ENCODE measurements at regions of chr11 and their contacts with region 1.

Region 1: GRCh38 chr11:9613118-9613829 is 39.8 kb downstream of the WEE1 start:
- DNase-seq: peak; percentile 95 to 97
- ATAC-seq: peak; percentile 96
- H3K4me3 ChIP-seq: peak overlapping the region in 1 of 2 donors; percentile 23
- H3K27ac ChIP-seq: peak overlapping the region; percentile 77 to 96
- H3K4me1 ChIP-seq: peaks cover 2 to 6% of the 10 kb centered on the region in 2 donors
- H3K27me3 ChIP-seq: no peaks in the 10 kb centered on the region

Region 2: GRCh38 chr11:9385304-9385902 is 227.9 kb before region 1 on chr11:
- intact Hi-C with region 1: no loop called
- DNase-seq: no peak
- ATAC-seq: peak; percentile 36
- H3K4me3 ChIP-seq: peak overlapping the region; percentile 67 to 76
- H3K27ac ChIP-seq: peak overlapping the region; percentile 10 to 87
- H3K4me1 ChIP-seq: peaks cover 0 to 3% of the 10 kb centered on the region in 2 donors
- H3K27me3 ChIP-seq: no peaks in the 10 kb centered on the region

Region 3: GRCh38 chr11:9534791-9535781 is 78.2 kb before region 1 on chr11:
- intact Hi-C with region 1: loop called in 1 of 2 experiments (anchors 10 kb)
- DNase-seq: peak; percentile 85 to 93
- ATAC-seq: peak; percentile 53
- H3K4me3 ChIP-seq: no peak overlapping the region
- H3K27ac ChIP-seq: peak overlapping the region in 1 of 2 donors; percentile 8
- H3K4me1 ChIP-seq: no peaks in the 10 kb centered on the region
- H3K27me3 ChIP-seq: no peaks in the 10 kb centered on the region

Region 4: DNA sequence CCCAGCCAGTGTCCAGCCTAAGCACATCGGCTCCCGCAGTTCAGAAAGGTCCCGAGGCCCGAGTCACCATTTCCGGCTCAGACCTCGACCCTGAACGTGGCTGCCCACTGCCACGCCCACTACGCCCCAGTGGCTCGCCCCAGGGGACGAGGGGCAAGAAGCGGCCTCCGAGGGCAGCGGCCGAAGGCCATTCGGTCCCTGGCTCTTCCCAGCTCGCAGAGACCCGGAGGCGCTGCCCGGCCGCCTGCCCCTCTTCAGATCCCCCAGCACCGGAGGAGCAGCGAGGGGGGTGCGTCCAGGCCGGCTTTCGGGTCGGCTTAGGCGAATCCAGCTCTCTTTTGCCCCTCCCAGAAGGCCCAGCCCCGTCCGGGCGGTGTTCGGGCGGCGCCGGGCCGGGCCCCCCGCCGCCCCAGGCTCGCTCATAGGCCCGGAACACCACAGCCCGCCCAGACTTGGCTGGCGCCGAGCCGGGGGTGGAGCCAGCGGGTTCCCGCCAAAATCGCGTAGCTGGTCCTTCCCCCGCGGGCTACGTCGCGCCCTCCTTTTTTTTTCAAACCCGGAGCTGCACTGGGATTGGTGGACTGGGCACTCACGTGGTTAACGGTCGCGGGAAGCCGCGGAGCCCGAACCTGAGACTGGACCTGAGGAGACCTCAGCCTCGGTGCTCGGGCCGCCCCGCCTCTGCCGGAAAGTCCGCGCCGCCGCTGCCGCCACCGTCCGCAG is 40.1 kb before region 1 on chr11 and contains the start of gene WEE1:
- intact Hi-C with region 1: loop called (anchors 2 to 5 kb)
- DNase-seq: peak; percentile 99
- ATAC-seq: peak; percentile 97
- H3K4me3 ChIP-seq: peak within 1 kb of the TSS; percentile 73 to 98
- H3K27ac ChIP-seq: peak within 1 kb of the TSS; percentile 89 to 93
- H3K4me1 ChIP-seq: no peaks in the 10 kb centered on the region
- H3K27me3 ChIP-seq: no peaks in the 10 kb centered on the region
- total RNA-seq, gene WEE1: 19.5 to 41.3 TPM

Region 5: GRCh38 chr11:9663699-9664275 is 50.5 kb after region 1 on chr11 and contains the start of gene SWAP70:
- intact Hi-C with region 1: loop called (anchors 2 to 5 kb)
- DNase-seq: peak; percentile 95 to 97
- ATAC-seq: peak; percentile 97
- H3K4me3 ChIP-seq: peak within 1 kb of the TSS; percentile 83 to 92
- H3K27ac ChIP-seq: peak within 1 kb of the TSS; percentile 2 to 93
- H3K4me1 ChIP-seq: no peaks in the 10 kb centered on the region
- H3K27me3 ChIP-seq: no peaks in the 10 kb centered on the region
- total RNA-seq, gene SWAP70: 64.4 to 69.0 TPM

Region 6: GRCh38 chr11:9748361-9748970 is 135.2 kb after region 1 on chr11:
- intact Hi-C with region 1: loop called (anchors 1 to 5 kb)
- DNase-seq: peak in 1 of 2 donors; percentile 72
- ATAC-seq: peak; percentile 90
- H3K4me3 ChIP-seq: no peak overlapping the region
- H3K27ac ChIP-seq: no peak overlapping the region
- H3K4me1 ChIP-seq: no peaks in the 10 kb centered on the region
- H3K27me3 ChIP-seq: no peaks in the 10 kb centered on the region

Region 7: DNA sequence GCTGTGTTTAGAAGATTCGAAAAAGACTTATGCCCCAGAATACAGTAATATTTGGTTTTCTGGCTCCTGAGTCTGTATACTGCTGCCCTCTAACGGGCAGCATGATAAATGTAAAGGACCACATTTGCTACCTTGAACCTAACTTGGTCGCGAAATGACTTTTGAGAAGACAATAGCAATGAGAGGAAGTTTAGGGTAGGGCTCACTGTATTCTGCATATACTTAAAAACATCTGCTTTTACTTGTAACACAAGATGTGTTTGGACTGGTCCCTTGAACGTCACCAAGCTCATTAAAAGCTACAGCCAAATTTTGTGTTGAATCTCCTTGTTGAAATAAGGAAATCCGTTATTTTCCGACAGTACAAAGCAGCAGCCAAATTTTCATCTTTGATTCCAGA is 359.7 kb after region 1 on chr11:
- intact Hi-C with region 1: loop called in 1 of 2 experiments (anchors 5 kb)
- DNase-seq: no peak
- ATAC-seq: no peak
- H3K4me3 ChIP-seq: no peak overlapping the region
- H3K27ac ChIP-seq: no peak overlapping the region
- H3K4me1 ChIP-seq: peaks cover 0 to 2% of the 10 kb centered on the region in 2 donors
- H3K27me3 ChIP-seq: no peaks in the 10 kb centered on the region